ENCODE measurements at regions of chr10 and their contacts with region 1.

Region 1: DNA sequence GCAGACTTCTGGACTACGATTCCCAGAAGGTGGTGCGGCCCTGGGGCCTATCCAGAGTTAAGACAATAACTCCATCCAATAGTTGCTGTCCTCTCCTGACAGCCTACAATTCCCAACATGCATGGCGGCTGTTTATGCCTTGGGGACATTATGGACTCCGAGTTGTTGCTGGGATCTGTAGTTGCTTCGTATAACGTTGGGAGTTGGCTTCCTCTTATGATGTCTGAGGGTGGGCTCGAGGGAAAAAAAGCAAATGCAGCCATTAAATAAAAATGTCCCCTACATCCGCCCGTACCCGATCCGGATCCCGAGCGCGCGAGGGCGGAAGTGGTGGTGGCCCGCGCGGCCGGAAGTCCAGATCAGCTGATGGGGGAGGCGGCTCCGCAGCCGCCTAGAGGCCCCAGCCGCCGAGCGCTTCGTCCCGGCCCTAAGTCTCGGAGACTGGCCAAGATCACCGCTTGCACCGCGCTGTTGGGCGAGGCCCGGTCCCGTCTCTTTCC is at the start of gene ZSWIM8:
- DNase-seq: peak; percentile 85 to 96 (median 89)
- H3K4me3 ChIP-seq: peak within 1 kb of the TSS; percentile 62 to 64
- H3K4me3 Mint-ChIP-seq: peak within 1 kb of the TSS; percentile 94 to 99 (median 98)
- H3K27ac ChIP-seq: peak within 1 kb of the TSS; percentile 77
- H3K27ac Mint-ChIP-seq: peak within 1 kb of the TSS; percentile 95 to 99 (median 99)
- H3K4me1 ChIP-seq: peaks cover 54% of the 10 kb centered on the region
- H3K4me1 Mint-ChIP-seq: peaks cover 35 to 67% (median 50%) of the 10 kb centered on the region in 4 donors
- H3K27me3 ChIP-seq: no peaks in the 10 kb centered on the region
- H3K27me3 Mint-ChIP-seq: peaks cover 2% of the 10 kb centered on the region in 2 donors
- total RNA-seq, gene ZSWIM8: 93.3 to 100 TPM

Region 2: DNA sequence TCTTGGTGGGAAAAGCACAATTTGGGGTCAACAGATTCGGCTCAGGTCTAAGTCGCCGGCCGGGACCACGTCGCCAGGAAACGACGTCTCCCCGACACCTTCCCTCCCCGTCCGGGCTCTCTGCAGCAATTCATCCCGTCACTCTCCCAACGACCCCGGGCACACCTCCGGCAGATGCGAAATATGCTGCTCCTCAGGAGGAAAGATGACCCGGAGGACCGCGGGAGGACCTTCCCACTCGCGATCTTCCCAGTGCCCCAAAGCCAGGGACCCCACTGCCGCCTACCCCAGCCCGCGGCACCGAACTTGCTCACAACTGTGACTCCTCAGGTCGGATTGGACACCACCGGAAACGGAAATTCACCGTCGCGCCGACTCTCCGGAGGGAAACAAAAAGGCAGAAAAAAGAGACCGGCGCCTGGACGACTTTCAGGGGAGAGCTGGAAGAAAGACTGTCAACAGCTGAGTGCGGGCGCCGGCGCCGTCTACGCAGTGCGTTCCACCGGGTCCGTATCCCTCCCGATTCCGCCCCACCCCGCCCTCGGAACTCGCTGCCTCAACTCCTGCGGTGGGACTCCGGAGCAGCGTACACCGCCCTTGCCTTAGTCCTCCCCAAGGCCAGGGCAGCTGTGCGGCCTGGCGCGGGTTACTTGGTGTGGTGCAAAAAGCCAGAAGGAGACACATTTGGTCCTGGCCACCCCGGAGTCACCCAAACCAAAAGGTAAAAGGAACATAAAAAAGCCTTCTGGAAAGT is 54.9 kb before region 1 on chr10:
- CTCF ChIA-PET with region 1: no interaction called
- POLR2A ChIA-PET with region 1: interaction called, 17 read pairs
- intact Hi-C with region 1: loop called (anchors 1 kb)
- DNase-seq: peak; percentile 87 to 92 (median 90)
- H3K4me3 ChIP-seq: peak overlapping the region; percentile 78 to 81
- H3K4me3 Mint-ChIP-seq: peak overlapping the region; percentile 98 to 100 (median 100)
- H3K27ac ChIP-seq: peak overlapping the region; percentile 78
- H3K27ac Mint-ChIP-seq: peak overlapping the region; percentile 97 to 100 (median 98)
- H3K4me1 ChIP-seq: peaks cover 15% of the 10 kb centered on the region
- H3K4me1 Mint-ChIP-seq: peaks cover 12 to 39% (median 21%) of the 10 kb centered on the region in 4 donors
- H3K27me3 ChIP-seq: no peaks in the 10 kb centered on the region
- H3K27me3 Mint-ChIP-seq: no peaks in the 10 kb centered on the region

Region 3: DNA sequence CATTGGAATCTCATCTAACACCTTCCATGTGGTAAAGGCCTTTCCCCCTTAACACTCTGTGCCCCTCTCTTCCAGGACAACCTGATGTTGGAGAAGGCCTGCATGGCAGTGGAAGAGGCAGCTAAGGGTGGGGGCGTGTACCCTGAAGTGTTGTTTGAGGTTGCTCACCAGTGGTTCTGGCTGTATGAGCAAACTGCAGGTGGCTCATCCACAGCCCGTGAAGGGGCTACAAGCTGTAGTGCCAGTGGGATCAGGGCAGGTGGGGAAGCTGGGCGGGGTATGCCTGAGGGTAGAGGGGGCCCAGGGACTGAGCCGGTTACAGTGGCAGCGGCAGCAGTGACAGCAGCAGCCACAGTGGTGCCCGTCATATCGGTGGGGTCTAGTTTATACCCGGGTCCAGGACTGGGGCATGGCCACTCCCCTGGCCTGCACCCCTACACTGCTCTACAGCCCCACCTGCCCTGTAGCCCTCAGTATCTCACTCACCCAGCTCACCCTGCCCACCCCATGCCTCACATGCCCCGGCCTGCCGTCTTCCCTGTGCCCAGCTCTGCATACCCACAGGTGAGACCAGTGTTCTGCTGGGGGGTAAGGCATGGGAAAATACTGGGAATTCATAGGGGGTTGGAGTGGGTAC is 13.8 kb after region 1 on chr10:
- CTCF ChIA-PET with region 1: interaction called, 5 read pairs
- POLR2A ChIA-PET with region 1: interaction called, 13 read pairs
- intact Hi-C with region 1: no loop called
- DNase-seq: no peak
- H3K4me3 ChIP-seq: no peak overlapping the region
- H3K4me3 Mint-ChIP-seq: no peak overlapping the region
- H3K27ac ChIP-seq: no peak overlapping the region
- H3K27ac Mint-ChIP-seq: peak overlapping the region in 2 of 7 donors; percentile 46 to 63
- H3K4me1 ChIP-seq: no peaks in the 10 kb centered on the region
- H3K4me1 Mint-ChIP-seq: peaks cover 0 to 7% (median 0%) of the 10 kb centered on the region in 4 donors
- H3K27me3 ChIP-seq: no peaks in the 10 kb centered on the region
- H3K27me3 Mint-ChIP-seq: no peaks in the 10 kb centered on the region

Region 4: GRCh38 chr10:73931767-73932619 is 146.7 kb after region 1 on chr10:
- CTCF ChIA-PET with region 1: no interaction called
- POLR2A ChIA-PET with region 1: no interaction called
- intact Hi-C with region 1: no loop called
- DNase-seq: peak; percentile 46 to 89 (median 51)
- H3K4me3 ChIP-seq: no peak overlapping the region
- H3K4me3 Mint-ChIP-seq: peak overlapping the region in 2 of 8 donors; percentile 17 to 38
- H3K27ac ChIP-seq: no peak overlapping the region
- H3K27ac Mint-ChIP-seq: peak overlapping the region in 4 of 7 donors; percentile 24 to 72 (median 48)
- H3K4me1 ChIP-seq: peaks cover 13% of the 10 kb centered on the region
- H3K4me1 Mint-ChIP-seq: peaks cover 6 to 15% (median 10%) of the 10 kb centered on the region in 4 donors
- H3K27me3 ChIP-seq: no peaks in the 10 kb centered on the region
- H3K27me3 Mint-ChIP-seq: peaks cover 0 to 3% of the 10 kb centered on the region in 2 donors

Region 5: GRCh38 chr10:74096777-74097176 is 311.5 kb after region 1 on chr10:
- CTCF ChIA-PET with region 1: no interaction called
- POLR2A ChIA-PET with region 1: no interaction called
- intact Hi-C with region 1: no loop called
- DNase-seq: no peak
- H3K4me3 ChIP-seq: no peak overlapping the region
- H3K4me3 Mint-ChIP-seq: no peak overlapping the region
- H3K27ac ChIP-seq: no peak overlapping the region
- H3K27ac Mint-ChIP-seq: peak overlapping the region in 4 of 7 donors; percentile 16 to 55 (median 32)
- H3K4me1 ChIP-seq: no peaks in the 10 kb centered on the region
- H3K4me1 Mint-ChIP-seq: peaks cover 0 to 3% (median under 1%) of the 10 kb centered on the region in 4 donors
- H3K27me3 ChIP-seq: no peaks in the 10 kb centered on the region
- H3K27me3 Mint-ChIP-seq: no peaks in the 10 kb centered on the region

Region 6: GRCh38 chr10:74165530-74165901 is 380.2 kb after region 1 on chr10:
- CTCF ChIA-PET with region 1: no interaction called
- POLR2A ChIA-PET with region 1: no interaction called
- intact Hi-C with region 1: no loop called
- DNase-seq: no peak
- H3K4me3 ChIP-seq: no peak overlapping the region
- H3K4me3 Mint-ChIP-seq: no peak overlapping the region
- H3K27ac ChIP-seq: no peak overlapping the region
- H3K27ac Mint-ChIP-seq: no peak overlapping the region
- H3K4me1 ChIP-seq: no peaks in the 10 kb centered on the region
- H3K4me1 Mint-ChIP-seq: peaks cover 0 to 5% (median 2%) of the 10 kb centered on the region in 4 donors
- H3K27me3 ChIP-seq: no peaks in the 10 kb centered on the region
- H3K27me3 Mint-ChIP-seq: no peaks in the 10 kb centered on the region